ENCODE measurements at regions of chr4 and their contacts with region 1.

Region 1: GRCh38 chr4:80362578-80363181 is 27.1 kb downstream of the CFAP299 start:
- DNase-seq: peak in 1 of 2 donors; percentile 15
- H3K4me3 ChIP-seq: no peak overlapping the region
- H3K27ac ChIP-seq: no peak overlapping the region
- H3K4me1 ChIP-seq: no peaks in the 10 kb centered on the region
- H3K27me3 ChIP-seq: no peaks in the 10 kb centered on the region
- CTCF ChIP-seq: peak in 2 of 6 experiments; percentile 28 to 33
- POLR2A ChIP-seq: no peak

Region 2: DNA sequence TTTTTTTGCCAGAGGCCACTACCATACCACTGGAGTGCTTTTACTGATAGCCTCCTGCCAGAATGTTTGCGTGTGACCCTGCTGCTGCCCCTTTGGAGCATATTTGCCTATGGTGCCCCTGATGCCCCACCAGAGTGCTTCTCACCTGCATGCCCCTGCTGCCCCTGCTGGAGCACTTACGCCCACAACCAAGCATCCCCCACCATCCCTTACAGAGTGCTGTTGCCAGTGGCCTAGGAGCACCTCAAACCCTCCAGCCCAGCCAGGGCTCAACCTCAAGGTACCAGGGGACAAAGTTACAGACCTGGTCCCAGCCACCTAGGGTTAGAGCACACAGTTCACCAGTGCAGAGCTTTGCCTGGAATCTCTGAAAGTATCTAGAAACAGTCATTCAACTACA is 180.1 kb after region 1 on chr4:
- intact Hi-C with region 1: no loop called
- DNase-seq: no peak
- H3K4me3 ChIP-seq: no peak overlapping the region
- H3K27ac ChIP-seq: no peak overlapping the region
- H3K4me1 ChIP-seq: no peaks in the 10 kb centered on the region
- H3K27me3 ChIP-seq: no peaks in the 10 kb centered on the region
- CTCF ChIP-seq: no peak
- POLR2A ChIP-seq: no peak

Region 3: DNA sequence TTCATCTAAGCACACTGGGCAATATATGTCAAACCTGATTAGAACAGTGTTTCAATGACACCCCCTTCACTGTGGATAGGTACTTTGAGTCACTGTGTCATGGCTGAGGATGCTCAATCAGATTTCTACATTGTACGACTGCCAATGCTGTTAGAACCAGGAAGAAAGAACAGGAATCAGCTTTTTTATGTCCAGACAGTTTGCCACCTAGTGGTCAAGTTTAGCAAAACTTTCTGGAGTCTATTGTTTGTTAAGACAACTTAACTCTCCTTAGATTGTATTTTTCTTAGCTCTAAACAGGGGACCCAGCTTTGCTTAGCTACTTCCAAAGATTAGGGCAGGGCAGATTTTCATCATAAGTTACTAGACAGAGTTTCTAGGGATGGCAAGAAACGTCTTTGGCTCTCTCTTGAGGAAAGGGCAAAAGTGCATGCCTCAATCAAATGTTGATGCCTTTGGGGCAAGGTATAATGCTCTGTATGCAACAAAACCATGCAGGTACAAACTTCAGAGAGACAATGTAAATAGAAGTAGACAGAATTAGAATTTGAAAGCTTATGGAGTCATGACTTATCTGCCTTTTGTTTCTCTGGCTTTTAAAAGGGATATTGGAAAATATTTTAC is 627.4 kb after region 1 on chr4:
- intact Hi-C with region 1: loop called (anchors 5 kb)
- DNase-seq: peak; percentile 1 to 3
- H3K4me3 ChIP-seq: no peak overlapping the region
- H3K27ac ChIP-seq: no peak overlapping the region
- H3K4me1 ChIP-seq: no peaks in the 10 kb centered on the region
- H3K27me3 ChIP-seq: no peaks in the 10 kb centered on the region
- CTCF ChIP-seq: peak in 5 of 6 experiments; percentile 27 to 71 (median 64)
- POLR2A ChIP-seq: no peak

Region 4: GRCh38 chr4:81040012-81040659 is 677.5 kb after region 1 on chr4:
- intact Hi-C with region 1: loop called (anchors 5 kb)
- DNase-seq: no peak
- H3K4me3 ChIP-seq: no peak overlapping the region
- H3K27ac ChIP-seq: no peak overlapping the region
- H3K4me1 ChIP-seq: no peaks in the 10 kb centered on the region
- H3K27me3 ChIP-seq: no peaks in the 10 kb centered on the region
- CTCF ChIP-seq: peak in 5 of 6 experiments; percentile 23 to 62 (median 48)
- POLR2A ChIP-seq: no peak

Measured in thyroid gland (tissue), 4 donors.